ENCODE measurements at regions of chr7 and their contacts with region 1.

Region 1: GRCh38 chr7:4681886-4682620 is at the start of gene FOXK1:
- DNase-seq: peak; percentile 63 to 82 (median 78)
- H3K4me3 ChIP-seq: peak within 1 kb of the TSS; percentile 59 to 73
- H3K4me3 Mint-ChIP-seq: peak within 1 kb of the TSS; percentile 90 to 100 (median 96)
- H3K27ac ChIP-seq: peak within 1 kb of the TSS; percentile 94
- H3K27ac Mint-ChIP-seq: peak within 1 kb of the TSS; percentile 90 to 98 (median 94)
- H3K4me1 ChIP-seq: peaks cover 32% of the 10 kb centered on the region
- H3K4me1 Mint-ChIP-seq: peaks cover 22 to 37% (median 28%) of the 10 kb centered on the region in 4 donors
- H3K27me3 ChIP-seq: no peaks in the 10 kb centered on the region
- H3K27me3 Mint-ChIP-seq: peaks cover 0 to 2% of the 10 kb centered on the region in 2 donors
- total RNA-seq, gene FOXK1: 52.9 to 53.3 TPM

Region 2: DNA sequence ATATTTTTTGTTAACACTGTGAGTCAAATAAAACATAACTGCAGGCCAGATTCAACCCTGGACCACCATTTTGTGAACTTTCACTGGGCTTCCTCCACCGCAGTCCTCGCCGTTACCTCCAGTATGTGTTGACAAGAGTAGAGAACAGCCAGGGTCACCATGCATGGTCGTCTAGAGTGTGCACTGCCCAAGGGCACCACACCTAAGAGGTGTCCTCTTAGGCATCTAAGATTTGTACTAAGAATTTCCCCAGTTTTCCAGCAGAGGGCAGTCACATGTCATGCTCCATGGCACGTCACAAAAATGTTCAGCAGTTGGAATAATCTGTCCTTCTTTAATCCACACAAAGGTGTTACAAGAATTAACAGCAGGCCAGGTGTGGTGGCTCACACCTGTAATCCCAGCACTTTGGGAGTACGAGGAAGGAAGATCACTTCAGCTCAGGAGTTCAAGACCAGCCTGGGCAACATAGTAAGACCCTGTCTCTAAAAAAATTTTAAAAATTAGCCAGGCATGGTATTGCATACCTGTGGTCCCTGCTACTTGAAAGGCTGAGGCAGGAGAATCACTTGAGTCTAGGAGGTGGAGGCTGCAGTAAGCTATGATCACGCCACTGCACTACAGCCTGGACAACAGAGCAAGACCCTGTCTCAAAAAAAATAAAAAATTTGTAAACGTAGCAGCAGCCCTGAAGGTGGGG is 71.1 kb before region 1 on chr7:
- CTCF ChIA-PET with region 1: interaction called, 5 read pairs
- POLR2A ChIA-PET with region 1: interaction called, 3 read pairs
- intact Hi-C with region 1: loop called (anchors 1 kb)
- DNase-seq: peak; percentile 62 to 73 (median 67)
- H3K4me3 ChIP-seq: no peak overlapping the region
- H3K4me3 Mint-ChIP-seq: no peak overlapping the region
- H3K27ac ChIP-seq: no peak overlapping the region
- H3K27ac Mint-ChIP-seq: peak overlapping the region in 1 of 7 donors; percentile 70
- H3K4me1 ChIP-seq: peaks cover 4% of the 10 kb centered on the region
- H3K4me1 Mint-ChIP-seq: peaks cover 7 to 13% (median 9%) of the 10 kb centered on the region in 4 donors
- H3K27me3 ChIP-seq: no peaks in the 10 kb centered on the region
- H3K27me3 Mint-ChIP-seq: peaks cover 1 to 3% of the 10 kb centered on the region in 2 donors

Region 3: DNA sequence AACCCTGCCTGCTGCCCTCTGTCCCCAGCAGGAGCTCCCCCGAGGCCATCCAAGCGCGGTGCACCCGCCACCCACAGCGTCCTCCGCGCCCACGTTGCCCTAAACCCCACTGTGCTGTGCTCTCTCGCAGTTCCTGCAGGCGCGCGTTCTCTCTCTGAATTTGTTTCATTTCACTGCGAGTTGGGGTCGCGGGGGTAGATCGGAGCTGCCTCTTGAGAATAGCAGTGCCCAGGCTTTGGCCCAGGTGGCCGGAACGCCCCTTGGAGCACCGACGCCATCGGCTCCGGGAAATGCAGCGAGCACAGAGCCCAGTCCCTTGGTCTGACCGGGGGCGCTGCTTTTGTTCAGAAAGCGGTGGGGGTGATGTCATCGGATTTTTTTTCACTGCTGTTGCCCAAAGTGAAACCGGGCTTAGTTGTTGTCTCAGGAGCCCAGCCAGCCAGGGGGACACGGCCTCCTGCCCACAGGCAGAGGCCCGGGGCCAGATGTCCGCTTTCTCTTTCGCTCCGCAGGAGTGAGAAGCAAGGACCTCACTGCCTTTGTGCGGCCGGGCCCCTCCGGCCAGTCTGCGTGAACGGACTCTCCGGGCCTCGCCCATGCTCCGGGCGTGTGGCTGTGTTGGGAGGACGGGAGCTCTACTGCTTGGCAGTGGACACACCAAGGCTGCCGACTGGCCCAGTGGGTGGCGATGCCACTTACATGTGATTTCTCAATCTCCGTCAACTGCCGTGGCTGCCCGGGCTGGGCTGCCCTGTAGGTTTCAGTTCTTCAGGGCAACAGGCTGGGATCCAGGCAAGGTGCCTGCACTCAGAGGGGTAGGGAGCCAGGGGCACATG is 43.2 kb after region 1 on chr7:
- CTCF ChIA-PET with region 1: no interaction called
- POLR2A ChIA-PET with region 1: interaction called, 3 read pairs
- intact Hi-C with region 1: loop called (anchors 5 kb)
- DNase-seq: peak in 4 of 5 donors; percentile 29 to 66 (median 48)
- H3K4me3 ChIP-seq: peak overlapping the region in 1 of 2 donors; percentile 37
- H3K4me3 Mint-ChIP-seq: peak overlapping the region; percentile 81 to 91 (median 86)
- H3K27ac ChIP-seq: peak overlapping the region; percentile 62
- H3K27ac Mint-ChIP-seq: peak overlapping the region; percentile 63 to 92 (median 88)
- H3K4me1 ChIP-seq: peaks cover 20% of the 10 kb centered on the region
- H3K4me1 Mint-ChIP-seq: peaks cover 19 to 71% (median 36%) of the 10 kb centered on the region in 4 donors
- H3K27me3 ChIP-seq: no peaks in the 10 kb centered on the region
- H3K27me3 Mint-ChIP-seq: no peaks in the 10 kb centered on the region

Region 4: GRCh38 chr7:4744391-4745264 is 62.6 kb after region 1 on chr7:
- CTCF ChIA-PET with region 1: interaction called, 13 read pairs
- POLR2A ChIA-PET with region 1: interaction called, 37 read pairs
- intact Hi-C with region 1: loop called (anchors 1 kb)
- DNase-seq: peak; percentile 75 to 84 (median 80)
- H3K4me3 ChIP-seq: peak overlapping the region; percentile 20 to 59
- H3K4me3 Mint-ChIP-seq: peak overlapping the region; percentile 80 to 91 (median 87)
- H3K27ac ChIP-seq: peak overlapping the region; percentile 63
- H3K27ac Mint-ChIP-seq: peak overlapping the region; percentile 86 to 99 (median 95)
- H3K4me1 ChIP-seq: peaks cover 66% of the 10 kb centered on the region
- H3K4me1 Mint-ChIP-seq: peaks cover 41 to 76% (median 58%) of the 10 kb centered on the region in 4 donors
- H3K27me3 ChIP-seq: no peaks in the 10 kb centered on the region
- H3K27me3 Mint-ChIP-seq: no peaks in the 10 kb centered on the region

Measured in CD4-positive, alpha-beta memory T cell (primary cell).